Astrocyte of the cerebellum (primary cell): ENCODE measurements at regions of chr2 and their contacts with region 1.

Region 1: GRCh38 chr2:138652378-138652777 is 127.8 kb downstream of the NXPH2 start:
- DNase-seq: no peak
- H3K4me3 ChIP-seq: no peak overlapping the region
- CTCF ChIP-seq: no peak

Region 2: DNA sequence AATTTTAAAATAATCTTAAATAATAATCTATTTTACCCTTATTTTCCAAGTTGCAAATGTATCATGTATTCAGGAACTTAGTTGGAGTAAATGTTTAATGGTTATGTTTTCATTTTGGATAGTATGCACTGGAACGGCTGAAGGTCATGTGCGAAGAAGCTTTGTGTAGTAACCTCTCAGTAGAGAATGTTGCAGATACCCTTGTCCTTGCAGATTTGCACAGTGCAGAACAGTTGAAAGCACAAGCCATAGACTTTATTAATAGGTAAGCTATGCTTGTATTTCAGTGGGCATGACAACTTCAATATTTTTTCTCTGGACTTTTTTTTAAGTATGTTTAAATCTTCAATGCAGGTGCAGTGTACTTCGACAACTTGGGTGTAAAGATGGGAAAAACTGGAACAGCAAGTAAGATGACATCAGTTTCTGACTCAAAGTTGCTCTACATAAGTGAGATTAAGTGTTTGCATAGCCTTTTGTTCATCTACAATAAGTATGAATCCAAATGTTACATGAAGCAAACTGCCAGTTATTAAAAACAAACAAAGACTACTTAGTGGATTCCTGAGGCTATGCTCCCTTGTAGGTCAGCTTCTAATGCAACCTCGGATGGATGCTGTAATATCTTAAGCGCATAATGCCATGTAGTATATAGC is 87.7 kb before region 1 on chr2:
- in situ Hi-C with region 1: loop called (anchors 5 kb)
- DNase-seq: no peak
- H3K4me3 ChIP-seq: no peak overlapping the region
- CTCF ChIP-seq: no peak